WTC11 (cell line): ENCODE measurements at regions of chr7 and their contacts with region 1.

Region 1: GRCh38 chr7:128666200-128666599 is 5.9 kb upstream of the GARIN1A start:
- DNase-seq: no peak
- ATAC-seq: no peak
- H3K4me3 Mint-ChIP-seq: no peak overlapping the region
- H3K27ac Mint-ChIP-seq: no peak overlapping the region
- H3K4me1 Mint-ChIP-seq: no peaks in the 10 kb centered on the region
- H3K27me3 Mint-ChIP-seq: peaks cover 6% of the 10 kb centered on the region; the same call in 1 of the 2 replicates
- CTCF ChIP-seq: no peak

Region 2: GRCh38 chr7:127708788-127709187 is 957.4 kb before region 1 on chr7:
- CTCF ChIA-PET with region 1: no interaction called
- POLR2A ChIA-PET with region 1: no interaction called
- DNase-seq: peak; percentile 76
- ATAC-seq: peak; percentile 84
- H3K4me3 Mint-ChIP-seq: no peak overlapping the region
- H3K27ac Mint-ChIP-seq: no peak overlapping the region
- H3K4me1 Mint-ChIP-seq: peaks cover 2% of the 10 kb centered on the region; the same call in 1 of the 2 replicates
- H3K27me3 Mint-ChIP-seq: no peaks in the 10 kb centered on the region; the same call in 1 of the 2 replicates
- CTCF ChIP-seq: peak; percentile 65

Region 3: DNA sequence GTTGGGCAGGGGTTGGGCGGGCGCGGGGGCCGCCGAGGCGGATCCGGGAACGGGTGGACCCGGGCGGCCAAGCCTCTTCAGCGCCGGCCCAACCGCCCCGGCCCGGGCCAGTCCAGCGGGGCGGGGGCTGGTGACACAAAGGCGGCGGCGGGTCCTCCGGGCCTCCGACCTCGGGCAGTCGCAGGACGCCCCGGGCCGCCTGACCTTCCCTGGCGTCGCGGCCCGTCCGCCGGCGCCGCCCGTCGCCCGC is 135.4 kb before region 1 on chr7:
- CTCF ChIA-PET with region 1: no interaction called
- POLR2A ChIA-PET with region 1: no interaction called
- DNase-seq: no peak
- ATAC-seq: no peak
- H3K4me3 Mint-ChIP-seq: no peak overlapping the region
- H3K27ac Mint-ChIP-seq: no peak overlapping the region
- H3K4me1 Mint-ChIP-seq: peaks cover 17% of the 10 kb centered on the region
- H3K27me3 Mint-ChIP-seq: no peaks in the 10 kb centered on the region
- CTCF ChIP-seq: no peak

Region 4: DNA sequence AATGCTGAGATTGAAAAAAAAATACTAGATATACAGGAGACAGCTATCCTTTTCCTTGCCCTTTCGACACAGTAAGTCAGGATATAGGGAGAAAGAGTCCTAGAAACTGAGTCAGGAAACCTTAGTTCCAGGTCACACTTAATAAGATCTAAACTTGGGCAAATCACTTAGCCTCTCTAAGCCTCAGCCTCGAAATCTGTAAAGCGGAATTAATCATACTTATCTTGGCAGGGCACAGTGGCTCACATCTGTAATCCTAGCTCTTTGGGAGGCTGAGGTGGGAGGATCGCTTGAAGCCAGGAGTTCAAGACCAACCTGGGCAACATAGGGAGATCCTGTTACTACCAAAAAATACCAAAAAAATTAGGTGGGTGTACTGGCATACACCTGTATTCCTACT is 10.5 kb after region 1 on chr7:
- CTCF ChIA-PET with region 1: interaction called, 10 read pairs
- POLR2A ChIA-PET with region 1: no interaction called
- DNase-seq: no peak
- ATAC-seq: no peak
- H3K4me3 Mint-ChIP-seq: no peak overlapping the region
- H3K27ac Mint-ChIP-seq: no peak overlapping the region
- H3K4me1 Mint-ChIP-seq: 0 out of 2 replicates have a peak, but pooled peaks cover 3% of the 10 kb centered on the region
- H3K27me3 Mint-ChIP-seq: peaks cover 7% of the 10 kb centered on the region; the same call in 1 of the 2 replicates
- CTCF ChIP-seq: no peak

Region 5: DNA sequence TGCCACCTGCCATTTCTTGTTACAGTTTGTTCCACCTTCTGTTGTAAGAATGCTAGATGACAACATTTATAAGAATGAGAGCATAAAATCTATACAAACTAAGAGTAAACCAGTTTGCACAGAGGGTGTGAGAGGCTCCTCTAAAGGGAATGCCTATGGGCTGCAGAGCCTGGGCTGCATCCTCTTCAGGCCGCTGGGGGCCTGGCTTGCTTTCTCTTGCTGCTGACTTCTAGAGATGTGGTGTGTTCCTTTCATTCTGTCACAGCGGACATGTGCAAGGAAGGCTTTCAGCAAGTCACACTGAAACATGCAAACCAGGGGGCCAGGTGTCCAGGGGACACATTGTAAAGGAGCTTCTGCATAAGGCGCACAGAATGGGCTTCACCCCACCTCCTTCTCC is 189.4 kb after region 1 on chr7:
- CTCF ChIA-PET with region 1: no interaction called
- POLR2A ChIA-PET with region 1: no interaction called
- DNase-seq: no peak
- ATAC-seq: no peak
- H3K4me3 Mint-ChIP-seq: no peak overlapping the region
- H3K27ac Mint-ChIP-seq: no peak overlapping the region
- H3K4me1 Mint-ChIP-seq: peaks cover 11% of the 10 kb centered on the region
- H3K27me3 Mint-ChIP-seq: no peaks in the 10 kb centered on the region
- CTCF ChIP-seq: no peak

Region 6: GRCh38 chr7:128954830-128955802 is 288.9 kb after region 1 on chr7:
- CTCF ChIA-PET with region 1: no interaction called
- POLR2A ChIA-PET with region 1: no interaction called
- DNase-seq: no peak
- ATAC-seq: peak; percentile 66
- H3K4me3 Mint-ChIP-seq: peak overlapping the region; percentile 22; the same call in 1 of the 2 replicates
- H3K27ac Mint-ChIP-seq: peak overlapping the region; percentile 83
- H3K4me1 Mint-ChIP-seq: peaks cover 34% of the 10 kb centered on the region
- H3K27me3 Mint-ChIP-seq: no peaks in the 10 kb centered on the region
- CTCF ChIP-seq: no peak